Esophagus muscularis mucosa (tissue), 4 donors: ENCODE measurements at regions of chr11 and their contacts with region 1.

Region 1: DNA sequence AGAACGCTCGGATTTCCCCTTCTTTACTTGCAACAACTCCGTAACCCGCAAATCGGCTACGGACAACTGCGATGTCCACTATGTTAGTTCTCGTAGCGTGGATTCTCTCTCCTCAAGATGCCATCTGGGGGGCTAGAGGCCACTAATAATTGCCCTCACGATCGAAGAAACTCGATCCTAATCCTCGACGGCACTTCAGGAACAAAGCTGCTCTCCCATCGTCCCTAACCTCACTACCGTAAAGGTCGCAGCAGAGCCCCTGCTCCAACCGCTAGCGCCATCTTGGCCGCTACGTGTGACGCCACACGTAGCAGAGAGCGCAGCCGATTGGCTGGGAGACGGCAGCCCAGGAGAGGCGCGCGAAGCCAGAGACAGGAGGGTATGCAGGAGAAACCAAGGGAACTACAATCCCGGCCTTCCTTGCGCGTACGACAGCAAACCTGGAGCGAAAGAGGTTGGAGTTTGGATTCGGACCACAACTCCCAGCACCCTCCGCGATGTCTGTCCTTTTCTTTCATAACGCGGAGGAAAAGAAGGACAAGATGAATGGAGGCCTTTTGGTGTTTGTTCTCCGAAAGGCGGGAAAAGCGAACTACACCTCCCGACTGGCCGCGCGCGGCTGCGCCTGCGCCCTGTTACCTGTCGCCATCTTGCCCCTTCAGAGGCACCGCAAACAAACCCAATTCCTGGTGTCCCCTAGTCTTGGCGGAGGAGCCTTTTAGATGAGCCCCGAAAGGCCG is at the start of gene EMSY:
- DNase-seq: peak; percentile 99
- H3K4me3 ChIP-seq: peak within 1 kb of the TSS; percentile 62 to 95 (median 91)
- H3K27ac ChIP-seq: peak within 1 kb of the TSS; percentile 84 to 96 (median 94)
- H3K4me1 ChIP-seq: peaks cover 18 to 34% (median 30%) of the 10 kb centered on the region in 4 donors
- H3K27me3 ChIP-seq: no peaks in the 10 kb centered on the region
- CTCF ChIP-seq: no peak
- EP300 ChIP-seq: no peak
- POLR2A ChIP-seq: peak; percentile 98
- total RNA-seq, gene EMSY: 17.1 to 34.6 (median 27.6) TPM

Region 2: DNA sequence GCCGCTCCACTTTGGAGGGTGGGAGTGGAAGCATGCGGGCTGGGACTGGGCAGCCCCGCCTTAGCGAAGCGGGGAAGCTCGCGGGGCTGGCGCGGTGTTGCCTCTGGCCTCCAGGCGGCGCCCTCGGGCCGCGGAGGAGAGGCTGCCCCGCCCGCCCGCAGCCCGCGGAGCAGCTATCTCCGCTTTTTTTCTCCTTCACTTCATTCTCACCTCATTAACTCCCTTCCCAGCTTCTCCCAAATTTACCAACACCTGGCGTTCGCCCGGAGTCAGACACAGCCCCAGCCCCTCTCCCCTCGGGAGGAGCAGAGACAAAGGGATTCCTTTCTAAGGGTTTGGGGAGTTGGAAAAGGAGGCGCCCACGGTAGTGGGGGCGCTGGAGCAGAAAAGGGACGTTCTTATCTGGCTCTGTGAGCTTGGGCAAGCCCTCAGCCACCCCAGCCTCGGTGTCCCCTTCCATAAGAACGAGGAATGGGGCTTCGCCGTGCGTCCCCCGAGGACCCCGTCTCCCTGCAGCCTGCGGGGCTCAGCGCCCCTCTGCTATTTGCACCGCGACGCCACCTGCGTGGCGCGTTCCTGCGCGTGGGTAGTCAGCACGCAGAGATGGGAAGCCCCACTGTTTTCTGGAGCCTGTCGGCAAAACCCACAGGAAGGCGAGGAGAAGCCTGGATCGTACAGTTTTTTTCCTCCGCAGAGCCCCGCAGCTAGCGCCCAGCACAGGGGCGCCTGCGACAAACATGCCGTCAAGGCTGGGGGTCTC is 236.7 kb before region 1 on chr11:
- intact Hi-C with region 1: loop called (anchors 10 kb)
- DNase-seq: no peak
- H3K4me3 ChIP-seq: peak overlapping the region; percentile 62 to 68 (median 65)
- H3K27ac ChIP-seq: peak overlapping the region in 1 of 4 donors; percentile 70
- H3K4me1 ChIP-seq: peaks cover 39 to 60% (median 57%) of the 10 kb centered on the region in 4 donors
- H3K27me3 ChIP-seq: peaks cover 0 to 40% (median 0%) of the 10 kb centered on the region in 4 donors
- CTCF ChIP-seq: peak; percentile 96 to 98 (median 98)
- EP300 ChIP-seq: no peak
- POLR2A ChIP-seq: no peak

Region 3: GRCh38 chr11:76380967-76381719 is 63.4 kb before region 1 on chr11 and contains the starts of genes GVQW3 and THAP12:
- intact Hi-C with region 1: loop called (anchors 2 kb)
- DNase-seq: peak; percentile 99
- H3K4me3 ChIP-seq: peak within 1 kb of the TSS; percentile 87 to 98 (median 96)
- H3K27ac ChIP-seq: peak within 1 kb of the TSS; percentile 85 to 92 (median 91)
- H3K4me1 ChIP-seq: peaks cover 21 to 56% (median 39%) of the 10 kb centered on the region in 4 donors
- H3K27me3 ChIP-seq: no peaks in the 10 kb centered on the region
- CTCF ChIP-seq: peak in 1 of 3 experiments; percentile 25
- EP300 ChIP-seq: no peak
- POLR2A ChIP-seq: peak; percentile 21
- total RNA-seq, gene GVQW3: 0.50 to 1.6 (median 1.0) TPM
- total RNA-seq, gene THAP12: 20.7 to 28.8 (median 27.0) TPM

Region 4: GRCh38 chr11:76462317-76462716 is 17.8 kb after region 1 on chr11:
- intact Hi-C with region 1: no loop called
- DNase-seq: no peak
- H3K4me3 ChIP-seq: no peak overlapping the region
- H3K27ac ChIP-seq: no peak overlapping the region
- H3K4me1 ChIP-seq: no peaks in the 10 kb centered on the region
- H3K27me3 ChIP-seq: no peaks in the 10 kb centered on the region
- CTCF ChIP-seq: no peak
- EP300 ChIP-seq: no peak
- POLR2A ChIP-seq: no peak